ENCODE measurements at regions of chr4 and their contacts with region 1.

Region 1: DNA sequence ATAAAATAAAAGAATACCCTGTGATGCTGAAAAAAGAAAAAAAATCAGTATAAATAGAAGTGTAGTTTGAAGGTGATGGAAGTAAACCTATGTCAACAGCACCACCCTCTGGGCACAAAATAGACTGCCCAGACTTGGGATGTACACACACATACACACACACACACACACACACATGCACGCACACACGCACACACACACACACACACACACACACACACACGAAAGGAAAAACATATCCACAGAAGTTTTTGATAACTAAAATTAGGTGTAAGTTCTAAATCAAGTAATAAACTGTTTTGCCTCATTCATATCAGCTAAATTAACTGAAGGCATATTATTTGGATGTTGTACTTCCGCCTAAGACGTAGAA is 40.5 kb downstream of the ANXA5 start:
- DNase-seq: peak; percentile 66
- H3K4me3 Mint-ChIP-seq: no peak overlapping the region
- H3K27ac Mint-ChIP-seq: no peak overlapping the region
- H3K4me1 Mint-ChIP-seq: peaks cover 8% of the 10 kb centered on the region
- H3K27me3 Mint-ChIP-seq: no peaks in the 10 kb centered on the region
- CTCF ChIP-seq: peak; percentile 30

Region 2: DNA sequence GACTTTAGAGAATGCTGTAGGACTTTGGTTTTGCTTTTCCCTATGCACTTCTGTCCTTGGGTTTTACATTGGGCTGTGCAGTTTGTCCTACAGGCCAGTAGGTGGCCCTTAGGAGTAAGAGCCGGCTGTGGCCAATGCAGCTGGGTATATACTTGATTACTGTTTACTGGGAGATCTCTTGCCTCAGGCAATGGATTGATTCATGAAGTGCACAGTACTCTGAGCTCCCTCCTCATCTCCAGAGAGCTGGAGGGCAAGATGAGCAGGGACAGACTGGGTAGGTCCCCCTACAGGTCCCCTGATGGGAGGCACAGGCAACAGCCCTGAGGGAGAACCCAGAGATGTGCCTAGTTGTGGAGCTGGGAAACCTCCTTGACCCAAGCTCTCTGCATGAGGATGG is 171.6 kb before region 1 on chr4:
- CTCF ChIA-PET with region 1: interaction called, 5 read pairs
- POLR2A ChIA-PET with region 1: no interaction called
- intact Hi-C with region 1: loop called (anchors 1 kb)
- DNase-seq: peak; percentile 63
- H3K4me3 Mint-ChIP-seq: no peak overlapping the region
- H3K27ac Mint-ChIP-seq: no peak overlapping the region
- H3K4me1 Mint-ChIP-seq: peaks cover 5% of the 10 kb centered on the region
- H3K27me3 Mint-ChIP-seq: no peaks in the 10 kb centered on the region
- CTCF ChIP-seq: peak; percentile 68

Region 3: GRCh38 chr4:121668368-121669162 is 12.3 kb after region 1 on chr4:
- CTCF ChIA-PET with region 1: interaction called, 16 read pairs
- POLR2A ChIA-PET with region 1: no interaction called
- intact Hi-C with region 1: no loop called
- DNase-seq: peak; percentile 56
- H3K4me3 Mint-ChIP-seq: no peak overlapping the region
- H3K27ac Mint-ChIP-seq: peak overlapping the region; percentile 51
- H3K4me1 Mint-ChIP-seq: peaks cover 7% of the 10 kb centered on the region
- H3K27me3 Mint-ChIP-seq: no peaks in the 10 kb centered on the region
- CTCF ChIP-seq: no peak

Region 4: DNA sequence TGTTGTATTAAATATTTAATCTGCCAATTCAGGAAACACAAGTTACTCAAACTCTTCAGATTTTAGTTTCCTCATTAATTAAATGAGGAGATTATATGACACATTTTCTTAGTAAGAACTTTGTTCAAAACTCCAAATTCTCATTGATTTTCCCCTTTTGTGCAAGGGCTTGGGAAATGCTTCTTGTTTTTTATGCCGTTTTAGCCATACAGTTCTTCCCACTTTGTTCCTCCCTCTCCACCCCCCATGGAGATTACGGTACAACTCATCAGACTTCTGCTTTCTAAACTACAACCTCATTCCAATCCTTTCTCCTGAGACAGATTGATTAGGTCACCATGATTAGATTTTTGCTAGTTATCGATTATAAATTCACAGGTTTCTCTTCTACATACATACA is 224.9 kb after region 1 on chr4:
- CTCF ChIA-PET with region 1: no interaction called
- POLR2A ChIA-PET with region 1: no interaction called
- intact Hi-C with region 1: no loop called
- DNase-seq: no peak
- H3K4me3 Mint-ChIP-seq: no peak overlapping the region
- H3K27ac Mint-ChIP-seq: no peak overlapping the region
- H3K4me1 Mint-ChIP-seq: no peaks in the 10 kb centered on the region
- H3K27me3 Mint-ChIP-seq: peaks cover 32% of the 10 kb centered on the region
- CTCF ChIP-seq: no peak

Region 5: DNA sequence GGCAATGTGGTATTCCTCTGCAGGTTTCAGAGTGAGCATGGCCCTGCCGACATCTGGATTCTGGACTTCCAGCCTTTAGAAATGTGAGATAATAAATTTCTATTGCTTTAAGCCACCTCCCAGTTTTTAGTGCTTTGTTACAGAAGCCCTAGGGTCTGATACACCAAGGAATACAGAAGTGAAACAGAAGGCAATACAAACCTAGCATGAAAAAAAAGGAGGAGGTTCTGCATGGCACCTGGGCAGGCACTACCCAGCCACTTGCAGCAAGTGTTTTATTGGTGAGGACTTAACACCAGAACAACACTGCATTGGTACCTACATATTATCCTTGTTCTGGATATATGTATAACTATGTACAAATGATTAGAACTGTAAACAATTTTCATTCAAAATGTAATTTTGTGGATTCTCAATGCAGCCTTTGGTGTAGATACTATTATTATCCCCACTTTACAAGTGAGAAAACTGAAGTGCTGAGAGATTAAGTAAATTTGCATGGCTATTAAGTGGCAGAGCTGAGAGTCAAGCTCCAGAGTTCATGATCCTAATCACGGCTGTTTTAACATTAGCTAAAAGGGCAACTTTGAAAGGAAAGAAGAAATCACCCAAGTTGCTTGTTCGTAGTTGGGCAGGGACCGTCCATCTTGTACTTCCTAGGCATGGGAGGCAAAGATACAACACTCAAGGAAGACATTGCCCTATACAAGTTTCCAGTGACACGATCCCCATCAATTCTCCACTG is 892.8 kb after region 1 on chr4:
- CTCF ChIA-PET with region 1: no interaction called
- POLR2A ChIA-PET with region 1: no interaction called
- intact Hi-C with region 1: no loop called
- DNase-seq: no peak
- H3K4me3 Mint-ChIP-seq: no peak overlapping the region
- H3K27ac Mint-ChIP-seq: no peak overlapping the region
- H3K4me1 Mint-ChIP-seq: no peaks in the 10 kb centered on the region
- H3K27me3 Mint-ChIP-seq: no peaks in the 10 kb centered on the region
- CTCF ChIP-seq: no peak

Measured in MCF 10A (cell line).